Activated B cell treated with CpG ODN at 0.5 μM for 24 hours (primary cell): ENCODE measurements at regions of chr1 and their contacts with region 1.

Region 1: GRCh38 chr1:147273409-147274336 is 31.2 kb downstream of the CHD1L start:
- DNase-seq: no peak
- ATAC-seq: peak; percentile 49
- H3K4me3 Mint-ChIP-seq: no peak overlapping the region
- H3K27ac Mint-ChIP-seq: no peak overlapping the region
- H3K4me1 Mint-ChIP-seq: peaks cover 3% of the 10 kb centered on the region
- H3K27me3 Mint-ChIP-seq: no peaks in the 10 kb centered on the region
- CTCF ChIP-seq: peak; percentile 21

Region 2: GRCh38 chr1:147142886-147143285 is 130.8 kb before region 1 on chr1:
- CTCF ChIA-PET with region 1: no interaction called
- POLR2A ChIA-PET with region 1: no interaction called
- intact Hi-C with region 1: no loop called
- DNase-seq: no peak
- ATAC-seq: no peak
- H3K4me3 Mint-ChIP-seq: no peak overlapping the region
- H3K27ac Mint-ChIP-seq: no peak overlapping the region
- H3K4me1 Mint-ChIP-seq: no peaks in the 10 kb centered on the region
- H3K27me3 Mint-ChIP-seq: peaks cover 37% of the 10 kb centered on the region
- CTCF ChIP-seq: no peak

Region 3: GRCh38 chr1:147334292-147334691 is 60.6 kb after region 1 on chr1:
- CTCF ChIA-PET with region 1: no interaction called
- POLR2A ChIA-PET with region 1: no interaction called
- intact Hi-C with region 1: no loop called
- DNase-seq: no peak
- ATAC-seq: no peak
- H3K4me3 Mint-ChIP-seq: no peak overlapping the region
- H3K27ac Mint-ChIP-seq: no peak overlapping the region
- H3K4me1 Mint-ChIP-seq: no peaks in the 10 kb centered on the region
- H3K27me3 Mint-ChIP-seq: peaks cover 13% of the 10 kb centered on the region
- CTCF ChIP-seq: no peak

Region 4: DNA sequence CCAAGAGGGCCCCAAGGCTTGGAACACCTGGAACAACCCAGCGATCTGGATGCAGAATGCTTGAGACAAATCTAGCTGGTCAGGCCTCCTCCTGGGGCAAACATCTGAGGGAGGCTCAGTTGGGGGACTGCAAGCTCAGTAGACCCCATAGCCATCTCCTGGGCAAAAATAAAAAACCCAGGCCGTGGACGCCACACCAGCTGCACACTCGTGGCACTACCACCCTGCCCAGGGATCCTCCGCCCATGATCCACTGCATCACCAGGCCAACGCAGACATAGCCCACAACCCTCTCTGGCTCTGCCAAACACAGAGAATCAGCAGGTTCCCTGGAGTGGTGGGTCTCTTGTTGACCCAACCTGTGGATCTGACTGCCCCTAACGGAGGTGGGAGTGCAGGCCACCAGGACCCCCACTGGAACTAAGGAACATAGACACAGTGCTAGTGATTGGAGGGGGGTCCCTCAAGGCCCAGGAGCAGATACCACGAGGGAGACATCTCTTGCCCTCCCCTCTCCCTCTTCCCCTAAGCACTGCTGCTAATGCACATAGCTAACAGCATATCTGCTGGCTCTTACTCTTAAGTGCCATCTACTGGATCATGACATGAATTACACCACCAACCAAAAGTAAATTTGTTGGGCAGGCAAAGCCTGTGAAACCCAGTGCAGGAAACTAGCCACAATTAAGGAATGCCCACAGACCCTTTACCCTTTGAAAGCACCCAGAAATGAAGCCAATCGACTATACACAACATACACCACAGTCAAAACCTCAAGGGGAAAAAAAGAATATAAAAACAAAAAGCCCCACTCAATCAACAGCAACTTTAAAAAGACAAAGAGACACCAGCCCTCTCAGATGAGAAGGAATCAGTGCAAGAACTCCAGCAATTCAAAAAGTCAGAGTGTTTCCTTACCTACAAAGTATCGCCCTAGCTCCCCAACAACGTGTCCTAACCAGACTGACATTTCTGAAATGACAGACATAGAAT is 116.2 kb after region 1 on chr1:
- CTCF ChIA-PET with region 1: interaction called, 13 read pairs
- POLR2A ChIA-PET with region 1: no interaction called
- intact Hi-C with region 1: no loop called
- DNase-seq: no peak
- ATAC-seq: peak; percentile 40
- H3K4me3 Mint-ChIP-seq: no peak overlapping the region
- H3K27ac Mint-ChIP-seq: no peak overlapping the region
- H3K4me1 Mint-ChIP-seq: no peaks in the 10 kb centered on the region
- H3K27me3 Mint-ChIP-seq: peaks cover 16% of the 10 kb centered on the region
- CTCF ChIP-seq: no peak

Region 5: DNA sequence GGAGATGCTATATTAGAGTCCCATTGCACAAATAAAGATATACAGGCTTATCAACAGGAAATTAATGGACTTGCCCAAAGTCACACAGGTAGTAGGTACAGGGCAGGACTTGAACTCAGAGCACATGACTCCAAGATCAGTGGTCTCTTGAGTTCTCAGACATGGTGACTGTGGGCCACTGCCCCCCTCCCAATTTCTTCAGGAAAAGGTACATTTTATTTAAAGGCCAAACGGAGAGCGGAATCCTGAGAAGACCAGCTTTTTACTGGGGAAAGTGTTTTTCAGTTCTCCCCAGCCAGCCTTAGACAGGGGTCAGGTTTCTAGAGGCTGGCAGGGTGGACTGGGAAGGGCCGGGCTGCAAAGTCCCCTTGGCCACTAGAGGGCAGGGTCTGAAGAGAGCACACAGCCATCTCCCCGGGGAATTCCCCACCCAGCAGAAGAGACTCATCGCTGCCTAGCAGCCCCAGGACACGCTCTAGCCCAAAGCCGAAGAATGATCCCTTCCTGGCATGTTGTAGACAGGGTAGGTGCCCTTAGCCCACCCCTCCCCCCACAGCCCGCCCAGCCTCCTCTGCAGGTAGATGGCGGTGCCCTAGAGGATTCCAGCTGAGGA is 367.0 kb after region 1 on chr1:
- CTCF ChIA-PET with region 1: no interaction called
- POLR2A ChIA-PET with region 1: no interaction called
- intact Hi-C with region 1: loop called (anchors 5 kb)
- DNase-seq: peak; percentile 42
- ATAC-seq: peak; percentile 96
- H3K4me3 Mint-ChIP-seq: no peak overlapping the region
- H3K27ac Mint-ChIP-seq: no peak overlapping the region
- H3K4me1 Mint-ChIP-seq: peaks cover 2% of the 10 kb centered on the region
- H3K27me3 Mint-ChIP-seq: no peaks in the 10 kb centered on the region
- CTCF ChIP-seq: peak; percentile 52